Common myeloid progenitor, CD34-positive (primary cell): ENCODE measurements at regions of chr18 and their contacts with region 1.

Region 1: GRCh38 chr18:77114415-77115191 is 18.0 kb downstream of the MBP start:
- DNase-seq: peak; percentile 98 to 100 (median 99)
- H3K4me3 ChIP-seq: peak overlapping the region in 4 of 7 experiments; percentile 33 to 43 (median 37)
- H3K27ac ChIP-seq: peak overlapping the region; percentile 86 to 92
- H3K4me1 ChIP-seq: peaks cover 23 to 96% (median 89%) of the 10 kb centered on the region in 4 experiments
- H3K27me3 ChIP-seq: no peaks in the 10 kb centered on the region

Region 2: DNA sequence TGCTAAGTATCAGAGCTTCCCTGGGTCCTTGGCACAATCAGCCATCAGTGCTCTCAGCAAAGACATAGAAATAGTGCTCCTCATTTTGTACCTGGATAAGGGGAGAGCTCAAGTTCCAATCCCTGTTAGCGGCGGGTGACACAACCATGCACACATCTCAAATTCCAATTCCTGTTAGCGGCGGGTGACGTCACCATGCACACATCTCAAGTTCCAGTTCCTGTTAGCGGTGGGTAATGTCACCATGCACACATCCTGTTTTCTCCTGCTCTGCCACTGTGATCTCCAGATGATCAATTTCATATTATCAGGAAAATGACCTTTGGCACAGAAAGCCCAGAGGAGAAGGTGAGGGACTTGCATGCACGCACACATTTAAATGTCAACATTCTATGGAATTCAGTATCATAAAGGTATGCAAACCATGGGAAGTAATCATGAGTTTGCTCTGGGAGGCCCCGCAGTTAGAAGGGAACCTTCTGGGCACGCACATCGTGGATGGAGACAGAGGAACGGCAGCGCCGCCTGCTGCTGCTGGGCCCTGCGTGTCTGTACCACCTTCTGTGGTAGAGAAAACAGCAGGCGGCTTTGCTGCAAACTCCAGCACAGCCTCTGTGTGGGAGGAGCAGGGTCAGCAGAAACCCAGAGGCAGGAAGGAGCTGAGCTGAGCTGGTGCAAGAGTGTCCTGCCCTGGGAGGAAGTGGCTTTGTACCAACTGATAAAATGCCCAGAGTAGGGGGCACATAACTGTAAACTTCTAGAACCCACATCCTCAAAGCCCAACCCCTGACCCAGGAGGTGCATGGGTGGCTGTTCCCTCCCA is 59.8 kb before region 1 on chr18:
- CTCF ChIA-PET with region 1: interaction called, 13 read pairs
- POLR2A ChIA-PET with region 1: interaction called, 7 read pairs
- DNase-seq: peak; percentile 93 to 96 (median 96)
- H3K4me3 ChIP-seq: peak overlapping the region in 6 of 7 experiments; percentile 3 to 47 (median 25)
- H3K27ac ChIP-seq: peak overlapping the region; percentile 83 to 90
- H3K4me1 ChIP-seq: peaks cover 31 to 77% (median 69%) of the 10 kb centered on the region in 4 experiments
- H3K27me3 ChIP-seq: no peaks in the 10 kb centered on the region

Region 3: GRCh38 chr18:77061946-77062517 is 52.6 kb before region 1 on chr18:
- CTCF ChIA-PET with region 1: interaction called, 51 read pairs
- POLR2A ChIA-PET with region 1: interaction called, 11 read pairs
- DNase-seq: peak; percentile 61 to 89 (median 84)
- H3K4me3 ChIP-seq: peak overlapping the region in 1 of 7 experiments; percentile 25
- H3K27ac ChIP-seq: peak overlapping the region; percentile 61 to 84
- H3K4me1 ChIP-seq: peaks cover 49 to 88% (median 75%) of the 10 kb centered on the region in 4 experiments
- H3K27me3 ChIP-seq: no peaks in the 10 kb centered on the region

Region 4: GRCh38 chr18:77101410-77102258 is 13.0 kb before region 1 on chr18:
- CTCF ChIA-PET with region 1: interaction called, 32 read pairs
- POLR2A ChIA-PET with region 1: interaction called, 10 read pairs
- DNase-seq: peak in 2 of 3 donors; percentile 73 to 78
- H3K4me3 ChIP-seq: peak overlapping the region in 4 of 7 experiments; percentile 22 to 51 (median 30)
- H3K27ac ChIP-seq: peak overlapping the region; percentile 59 to 72
- H3K4me1 ChIP-seq: peaks cover 38 to 99% (median 87%) of the 10 kb centered on the region in 4 experiments
- H3K27me3 ChIP-seq: no peaks in the 10 kb centered on the region

Region 5: GRCh38 chr18:77132371-77133050 is 17.9 kb after region 1 on chr18 and contains the start of gene MBP:
- CTCF ChIA-PET with region 1: interaction called, 57 read pairs
- POLR2A ChIA-PET with region 1: interaction called, 24 read pairs
- DNase-seq: peak in 1 of 3 donors; percentile 60
- H3K4me3 ChIP-seq: peak within 1 kb of the TSS; percentile 62 to 86 (median 78)
- H3K27ac ChIP-seq: peak within 1 kb of the TSS; percentile 72 to 87
- H3K4me1 ChIP-seq: peaks cover 22 to 73% (median 61%) of the 10 kb centered on the region in 4 experiments
- H3K27me3 ChIP-seq: no peaks in the 10 kb centered on the region